PC-3 (cell line): ENCODE measurements at regions of chr19 and their contacts with region 1.

Region 1: GRCh38 chr19:57769345-57770131 is at the start of gene ZNF586:
- DNase-seq: peak; percentile 96
- ATAC-seq: peak; percentile 99
- H3K4me3 ChIP-seq: peak within 1 kb of the TSS; percentile 68
- H3K27ac ChIP-seq: peak within 1 kb of the TSS; percentile 28
- H3K4me1 ChIP-seq: peaks cover 6% of the 10 kb centered on the region
- H3K27me3 ChIP-seq: no peaks in the 10 kb centered on the region
- CTCF ChIP-seq: no peak
- total RNA-seq, gene ZNF586: 13.1 and 13.2 TPM in 2 replicates

Region 2: DNA sequence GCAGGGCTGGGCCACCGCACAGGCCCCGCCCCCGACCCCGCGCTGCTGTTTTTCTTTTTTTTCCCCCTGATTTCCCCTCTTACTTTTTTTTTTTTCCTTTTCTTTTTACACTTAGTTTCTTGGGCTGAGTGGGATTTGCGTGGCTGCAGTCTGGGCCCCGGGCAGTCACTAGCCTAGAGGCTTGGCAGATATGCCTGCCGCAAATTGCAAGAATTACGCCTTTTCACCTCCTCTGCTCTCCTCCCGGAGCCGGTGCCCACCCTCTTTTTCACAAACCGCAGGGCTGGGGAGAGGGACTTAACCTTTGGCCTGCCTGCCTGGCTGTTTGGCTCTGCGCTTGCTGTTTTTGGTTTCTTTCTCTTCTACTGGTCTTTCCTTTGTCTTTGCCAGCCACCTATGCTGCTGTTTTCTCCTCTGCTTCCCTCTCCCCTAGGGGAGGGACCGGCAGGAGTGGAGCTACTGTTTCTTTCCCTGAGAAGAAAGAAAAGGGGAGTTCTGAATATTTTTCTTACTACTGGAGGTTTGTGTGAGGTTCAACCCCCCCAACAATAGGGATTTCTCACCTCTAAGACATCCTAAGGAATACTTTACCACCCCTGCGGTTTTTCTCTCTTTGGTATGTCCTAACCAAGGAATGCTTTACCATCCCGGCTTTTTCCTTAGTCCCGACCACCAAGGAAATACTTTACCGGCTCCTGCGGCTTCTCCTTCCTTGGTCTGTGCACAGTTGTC is 34.2 kb after region 1 on chr19:
- CTCF ChIA-PET with region 1: no interaction called
- POLR2A ChIA-PET with region 1: no interaction called
- intact Hi-C with region 1: loop called (anchors 5 kb)
- DNase-seq: peak; percentile 54
- ATAC-seq: peak; percentile 29
- H3K4me3 ChIP-seq: peak overlapping the region; percentile 62
- H3K27ac ChIP-seq: peak overlapping the region; percentile 64
- H3K4me1 ChIP-seq: peaks cover 40% of the 10 kb centered on the region
- H3K27me3 ChIP-seq: no peaks in the 10 kb centered on the region
- CTCF ChIP-seq: no peak

Region 3: DNA sequence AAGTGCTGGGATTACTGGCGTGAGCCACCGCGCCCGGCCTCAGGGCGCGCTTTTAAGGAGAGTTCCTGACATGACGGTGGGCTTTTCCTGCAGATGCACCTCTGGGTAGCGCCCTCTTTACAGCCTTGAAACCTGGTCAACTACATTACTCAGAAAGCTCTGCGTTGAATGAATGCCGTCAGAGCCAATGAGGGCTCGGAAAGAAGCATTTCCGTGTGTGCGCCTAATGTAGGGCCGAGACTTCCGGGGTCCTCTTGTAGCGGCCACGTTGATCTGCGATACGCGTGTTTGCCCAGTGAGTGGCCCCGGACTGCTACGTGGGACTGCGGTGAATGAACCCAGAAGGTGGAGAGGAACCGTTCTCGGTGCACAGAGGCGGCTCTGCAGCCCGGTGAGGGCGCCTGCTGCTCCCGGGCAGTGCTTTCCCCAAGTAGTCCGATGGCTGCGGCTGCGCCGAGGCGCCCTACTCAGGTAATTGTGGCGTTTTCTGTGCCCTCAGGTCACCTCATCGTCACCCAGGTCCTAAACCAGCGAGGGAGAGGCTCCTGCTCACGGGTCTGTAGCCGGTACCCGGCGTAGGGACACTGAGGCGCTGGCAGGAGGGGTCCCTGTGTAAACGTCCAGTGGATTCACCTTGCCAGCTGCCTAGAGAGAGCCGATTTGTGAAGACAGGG is 50.1 kb after region 1 on chr19:
- CTCF ChIA-PET with region 1: no interaction called
- POLR2A ChIA-PET with region 1: no interaction called
- intact Hi-C with region 1: no loop called
- DNase-seq: peak; percentile 98
- ATAC-seq: peak; percentile 86
- H3K4me3 ChIP-seq: peak overlapping the region; percentile 90
- H3K27ac ChIP-seq: peak overlapping the region; percentile 61
- H3K4me1 ChIP-seq: peaks cover 21% of the 10 kb centered on the region
- H3K27me3 ChIP-seq: no peaks in the 10 kb centered on the region
- CTCF ChIP-seq: peak; percentile 34; the same call in 1 of the 2 replicates

Region 4: GRCh38 chr19:58170860-58171259 is 401.3 kb after region 1 on chr19:
- CTCF ChIA-PET with region 1: no interaction called
- POLR2A ChIA-PET with region 1: no interaction called
- intact Hi-C with region 1: no loop called
- DNase-seq: peak; percentile 59
- ATAC-seq: peak; percentile 63; the same call in 1 of the 2 replicates
- H3K4me3 ChIP-seq: no peak overlapping the region
- H3K27ac ChIP-seq: no peak overlapping the region
- H3K4me1 ChIP-seq: no peaks in the 10 kb centered on the region
- H3K27me3 ChIP-seq: no peaks in the 10 kb centered on the region
- CTCF ChIP-seq: no peak